ENCODE measurements at regions of chr1 and their contacts with region 1.

Region 1: DNA sequence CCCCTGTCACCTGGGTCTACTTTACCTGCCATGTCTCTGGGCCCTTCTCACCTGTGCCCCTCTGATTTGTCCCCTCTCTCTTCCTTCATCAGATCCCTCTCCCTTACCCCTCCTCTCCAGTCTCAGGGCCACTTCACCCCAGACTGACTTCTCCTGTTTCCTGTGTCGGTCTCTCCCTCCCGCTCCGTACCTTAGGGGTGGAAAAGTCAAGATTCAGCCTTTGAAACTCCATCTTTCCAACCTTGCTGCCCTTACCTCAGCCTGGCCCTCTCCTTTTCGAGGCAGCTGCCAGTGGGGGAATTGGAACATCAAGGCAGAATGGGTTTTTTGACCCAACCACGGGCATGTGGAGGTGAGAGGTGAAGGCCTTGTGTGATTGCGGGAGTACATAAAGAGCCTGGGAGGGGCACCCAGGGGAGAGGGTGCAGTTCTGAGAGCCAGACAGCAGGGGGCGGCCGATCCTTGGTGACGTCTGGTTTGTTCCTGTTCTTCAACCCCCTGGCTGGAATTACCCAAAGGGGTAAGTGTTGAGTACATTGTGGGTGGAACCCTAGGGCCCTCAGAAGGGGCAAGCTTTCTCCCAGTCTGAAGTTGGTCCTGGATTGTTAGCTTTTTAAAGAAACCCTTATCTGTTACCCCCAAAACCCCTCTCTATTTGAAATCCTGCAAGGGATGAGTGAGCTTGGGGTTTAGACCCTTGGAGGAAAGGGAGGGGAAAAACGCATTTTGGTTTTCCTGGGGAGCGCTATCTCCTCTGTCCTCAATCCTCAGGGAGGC is 12.3 kb upstream of the DMBX1 start:
- DNase-seq: peak; percentile 52 to 83 (median 61)
- ATAC-seq: peak in 3 of 4 donors; percentile 66 to 86 (median 77)
- H3K4me3 ChIP-seq: no peak overlapping the region
- H3K27ac ChIP-seq: no peak overlapping the region
- H3K4me1 ChIP-seq: no peaks in the 10 kb centered on the region
- H3K27me3 ChIP-seq: peaks cover 0 to 81% (median 38%) of the 10 kb centered on the region in 9 donors
- CTCF ChIP-seq: peak; percentile 75 to 90 (median 83)
- POLR2A ChIP-seq: no peak

Region 2: DNA sequence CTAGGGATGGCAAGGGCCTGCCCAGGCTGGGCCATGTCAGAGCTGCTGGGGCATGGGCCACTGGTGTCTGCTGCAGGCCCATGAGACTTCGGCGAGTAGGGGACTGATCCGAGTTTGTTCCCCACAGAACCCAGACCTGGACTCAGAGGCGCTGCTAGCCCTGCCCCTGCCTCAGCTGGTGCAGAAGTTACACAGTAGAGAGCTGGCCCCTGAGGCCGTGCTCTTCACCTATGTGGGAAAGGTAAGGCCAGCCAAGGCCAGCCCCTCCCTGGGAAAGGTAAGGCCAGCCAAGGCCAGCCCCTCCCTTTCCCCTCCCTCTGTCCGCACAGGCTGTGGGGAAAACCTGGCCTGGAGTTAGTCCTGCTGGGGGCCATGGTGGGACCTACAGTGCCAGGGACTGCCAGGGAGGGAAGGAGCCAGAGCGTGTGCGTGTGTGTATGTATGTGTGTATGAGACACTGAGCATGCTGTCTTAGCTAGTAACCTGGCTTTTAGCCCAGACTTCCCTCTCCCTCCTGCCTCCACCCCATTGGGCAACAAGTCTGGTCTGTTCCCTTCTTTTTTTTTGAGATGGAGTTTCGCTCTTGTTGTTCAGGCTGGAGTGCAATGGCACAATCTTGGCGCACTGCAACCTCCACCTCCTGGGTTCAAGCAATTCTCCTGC is 75.2 kb before region 1 on chr1:
- intact Hi-C with region 1: no loop called
- DNase-seq: peak in 4 of 5 donors; percentile 40 to 60 (median 44)
- ATAC-seq: peak; percentile 40 to 78 (median 68)
- H3K4me3 ChIP-seq: no peak overlapping the region
- H3K27ac ChIP-seq: no peak overlapping the region
- H3K4me1 ChIP-seq: peaks cover 0 to 37% (median 6%) of the 10 kb centered on the region in 12 donors
- H3K27me3 ChIP-seq: no peaks in the 10 kb centered on the region
- CTCF ChIP-seq: no peak
- POLR2A ChIP-seq: no peak

Region 3: DNA sequence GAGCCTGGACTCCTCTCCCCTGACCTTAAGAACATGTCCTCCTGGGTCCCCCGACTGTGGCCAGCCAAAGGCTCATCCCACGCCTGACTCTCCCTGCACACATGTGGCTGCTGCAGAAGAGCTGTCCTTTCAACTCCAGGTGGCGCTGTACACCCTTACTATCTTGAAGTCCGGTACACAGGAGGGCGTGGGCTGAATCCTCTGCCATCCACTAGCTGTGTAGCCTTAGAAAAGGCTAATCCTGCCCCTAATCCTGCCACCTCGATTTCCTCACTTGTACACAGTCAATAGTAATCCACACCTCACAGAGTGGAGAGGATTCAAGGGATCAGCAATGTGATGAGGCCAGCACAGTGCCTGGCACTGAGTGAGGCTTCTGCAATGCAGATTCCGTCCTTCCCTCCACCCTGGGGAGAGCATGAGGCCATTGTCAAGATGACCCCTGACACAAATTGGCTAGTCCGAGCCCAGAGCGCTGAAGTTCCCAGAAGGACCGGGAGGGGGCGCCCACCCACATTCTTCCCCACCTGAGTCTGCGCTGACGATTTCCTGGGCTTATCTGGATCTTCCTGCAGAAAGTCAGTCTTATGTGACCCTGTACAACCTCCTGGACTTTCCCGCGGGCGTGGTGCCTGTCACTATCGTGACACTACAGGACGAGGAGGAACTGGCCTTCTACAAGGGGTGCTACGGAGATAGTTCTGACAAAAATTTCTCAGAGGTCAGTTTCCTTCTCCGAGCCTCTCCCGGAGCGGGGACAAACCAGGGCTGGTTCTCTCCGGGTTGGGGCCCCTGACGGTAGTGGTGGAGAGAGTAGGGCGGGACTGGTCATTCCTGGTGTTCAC is 34.8 kb before region 1 on chr1:
- intact Hi-C with region 1: loop called in 1 of 10 experiments (anchors 2 kb)
- DNase-seq: peak; percentile 54 to 82 (median 70)
- ATAC-seq: peak; percentile 67 to 79 (median 75)
- H3K4me3 ChIP-seq: peak overlapping the region in 10 of 12 donors; percentile 17 to 58 (median 46)
- H3K27ac ChIP-seq: peak overlapping the region in 1 of 12 donors; percentile 43
- H3K4me1 ChIP-seq: peaks cover 0 to 15% (median 0%) of the 10 kb centered on the region in 12 donors
- H3K27me3 ChIP-seq: peaks cover 0 to 19% (median 6%) of the 10 kb centered on the region in 9 donors
- CTCF ChIP-seq: peak; percentile 80 to 94 (median 90)
- POLR2A ChIP-seq: no peak

Region 4: DNA sequence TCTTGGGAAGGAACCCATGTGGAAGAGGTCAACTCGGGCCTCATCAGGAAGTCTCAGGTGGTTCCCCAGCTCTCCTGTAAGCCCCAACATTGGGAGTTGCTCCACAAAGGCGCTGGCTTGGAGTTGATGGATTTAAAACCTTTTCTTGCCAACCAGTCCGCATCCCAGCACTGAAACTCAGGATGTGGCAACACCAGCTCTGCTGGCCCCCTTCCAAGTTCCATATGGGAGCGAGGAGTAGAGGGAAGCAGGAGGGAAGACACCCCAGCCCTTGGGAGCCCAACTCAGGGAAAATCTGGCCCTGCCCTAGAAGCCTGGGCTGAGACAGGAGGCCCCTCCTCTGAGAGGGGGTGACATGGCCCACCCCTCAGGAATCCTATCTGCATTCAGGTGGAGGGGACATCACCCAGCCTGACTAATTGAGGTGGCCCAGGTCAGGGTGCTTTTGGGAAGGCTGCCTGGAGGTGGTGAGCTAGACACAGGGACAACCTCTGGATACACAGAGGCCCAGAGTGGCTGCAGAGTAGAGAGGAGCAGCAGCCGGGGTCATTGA is 20.9 kb before region 1 on chr1:
- intact Hi-C with region 1: no loop called
- DNase-seq: peak in 1 of 5 donors; percentile 7
- ATAC-seq: no peak
- H3K4me3 ChIP-seq: no peak overlapping the region
- H3K27ac ChIP-seq: no peak overlapping the region
- H3K4me1 ChIP-seq: no peaks in the 10 kb centered on the region
- H3K27me3 ChIP-seq: peaks cover 0 to 29% (median 0%) of the 10 kb centered on the region in 9 donors
- CTCF ChIP-seq: no peak
- POLR2A ChIP-seq: no peak

Region 5: GRCh38 chr1:46820560-46821060 is 343.3 kb after region 1 on chr1:
- intact Hi-C with region 1: no loop called
- DNase-seq: peak in 3 of 5 donors; percentile 22 to 58 (median 40)
- ATAC-seq: peak; percentile 55 to 88 (median 66)
- H3K4me3 ChIP-seq: no peak overlapping the region
- H3K27ac ChIP-seq: peak overlapping the region in 10 of 12 donors; percentile 27 to 72 (median 50)
- H3K4me1 ChIP-seq: peaks cover 0 to 23% (median 5%) of the 10 kb centered on the region in 12 donors
- H3K27me3 ChIP-seq: no peaks in the 10 kb centered on the region
- CTCF ChIP-seq: no peak
- POLR2A ChIP-seq: no peak